A673 (cell line): ENCODE measurements at regions of chr1 and their contacts with region 1.

Region 1: DNA sequence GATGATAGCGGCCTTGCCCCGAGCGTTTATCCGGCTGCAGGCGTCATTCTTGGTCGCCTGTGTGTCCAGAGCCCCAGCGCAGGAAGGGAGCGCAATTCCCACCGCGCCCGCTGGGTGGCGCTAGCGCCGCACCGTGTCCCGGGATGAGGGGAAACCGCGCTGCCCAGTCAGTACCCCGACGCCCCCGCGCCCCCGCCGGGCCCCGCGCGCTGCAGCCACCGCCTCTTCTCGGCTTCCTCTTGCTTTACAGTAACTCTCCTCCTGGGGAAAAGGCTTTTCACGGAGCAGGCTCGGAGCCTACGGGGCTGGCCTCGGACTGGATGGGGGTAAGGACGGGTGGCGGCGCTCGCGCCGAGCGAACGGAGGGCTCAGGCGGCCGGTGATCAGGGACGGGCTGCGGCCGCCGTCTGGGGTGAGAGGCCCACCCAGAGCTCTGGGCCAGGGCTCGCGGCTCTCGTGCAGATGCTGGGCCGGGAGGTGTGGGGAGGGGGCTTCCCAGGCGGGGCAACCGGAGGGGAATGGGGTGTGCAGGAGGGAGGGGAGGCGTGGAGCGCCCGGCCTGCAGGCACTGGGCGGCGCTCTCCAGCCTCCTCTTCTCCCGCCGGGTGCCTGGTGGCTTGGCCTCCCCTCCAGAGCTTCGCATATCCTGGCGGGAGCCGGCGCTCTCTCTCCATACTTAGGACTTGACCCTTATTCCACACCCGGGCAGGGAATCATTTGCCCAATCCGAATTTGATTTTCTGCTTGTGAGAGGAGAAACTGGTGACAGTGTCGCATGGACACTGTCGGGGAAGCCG is 29.8 kb downstream of the TEX35 start:
- DNase-seq: peak; percentile 85
- H3K4me3 ChIP-seq: peak overlapping the region; percentile 92
- H3K27ac ChIP-seq: peak overlapping the region; percentile 64
- H3K4me1 ChIP-seq: no peaks in the 10 kb centered on the region
- H3K27me3 ChIP-seq: no peaks in the 10 kb centered on the region
- CTCF ChIP-seq: peak; percentile 95

Region 2: DNA sequence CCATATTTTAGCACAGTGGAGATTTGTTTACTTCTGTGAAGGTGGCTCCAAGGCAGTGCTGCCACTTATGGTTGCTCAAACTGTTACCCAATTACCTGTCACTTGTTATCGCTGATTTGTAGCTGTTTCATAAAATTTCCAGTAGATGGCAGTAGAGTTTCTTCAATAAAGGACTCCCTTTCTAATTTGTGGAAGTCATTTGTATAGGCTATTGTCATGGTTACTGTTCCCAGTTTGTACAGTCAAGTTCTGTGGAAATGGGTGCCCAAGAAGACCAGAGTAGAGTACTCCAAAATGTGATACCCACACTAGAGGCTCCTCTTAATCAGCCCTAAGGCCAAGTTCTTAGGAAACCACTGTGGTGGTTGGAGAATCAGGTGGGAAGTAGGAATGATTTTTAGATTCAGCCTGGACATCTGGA is 232.1 kb before region 1 on chr1:
- CTCF ChIA-PET with region 1: no interaction called
- POLR2A ChIA-PET with region 1: no interaction called
- intact Hi-C with region 1: loop called (anchors 5 kb)
- DNase-seq: peak; percentile 84
- H3K4me3 ChIP-seq: no peak overlapping the region
- H3K27ac ChIP-seq: no peak overlapping the region
- H3K4me1 ChIP-seq: no peaks in the 10 kb centered on the region
- H3K27me3 ChIP-seq: no peaks in the 10 kb centered on the region
- CTCF ChIP-seq: peak; percentile 74

Region 3: DNA sequence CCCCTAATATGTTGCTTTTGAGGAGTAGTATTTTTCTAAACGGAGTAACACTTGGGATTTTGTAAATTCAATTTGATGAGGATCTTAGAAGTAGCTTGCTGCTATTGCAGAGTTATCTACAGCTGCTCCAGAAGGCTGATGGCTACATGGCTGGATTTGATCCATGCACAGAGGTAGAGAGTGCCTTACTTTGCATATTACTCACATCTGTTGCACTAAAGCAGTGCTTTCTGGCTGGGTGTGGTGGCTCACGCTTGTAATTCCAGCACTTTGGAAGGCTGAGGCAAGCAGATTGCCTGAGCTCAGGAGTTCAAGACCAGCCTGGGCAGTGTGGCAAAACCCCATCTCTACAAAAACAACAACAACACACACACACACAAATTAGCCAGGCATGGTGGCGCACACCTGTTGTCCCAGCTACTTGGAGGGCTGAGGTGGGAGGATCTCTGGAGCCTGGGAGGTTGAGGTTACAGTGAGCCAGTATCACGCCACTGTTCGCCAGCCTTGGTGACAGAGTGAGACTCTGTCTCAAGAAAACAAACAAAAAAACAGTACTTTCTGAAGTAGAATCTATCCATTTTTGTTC is 206.9 kb after region 1 on chr1:
- CTCF ChIA-PET with region 1: interaction called, 4 read pairs
- POLR2A ChIA-PET with region 1: no interaction called
- intact Hi-C with region 1: loop called (anchors 1 kb)
- DNase-seq: no peak
- H3K4me3 ChIP-seq: no peak overlapping the region
- H3K27ac ChIP-seq: no peak overlapping the region
- H3K4me1 ChIP-seq: no peaks in the 10 kb centered on the region
- H3K27me3 ChIP-seq: no peaks in the 10 kb centered on the region
- CTCF ChIP-seq: no peak

Region 4: DNA sequence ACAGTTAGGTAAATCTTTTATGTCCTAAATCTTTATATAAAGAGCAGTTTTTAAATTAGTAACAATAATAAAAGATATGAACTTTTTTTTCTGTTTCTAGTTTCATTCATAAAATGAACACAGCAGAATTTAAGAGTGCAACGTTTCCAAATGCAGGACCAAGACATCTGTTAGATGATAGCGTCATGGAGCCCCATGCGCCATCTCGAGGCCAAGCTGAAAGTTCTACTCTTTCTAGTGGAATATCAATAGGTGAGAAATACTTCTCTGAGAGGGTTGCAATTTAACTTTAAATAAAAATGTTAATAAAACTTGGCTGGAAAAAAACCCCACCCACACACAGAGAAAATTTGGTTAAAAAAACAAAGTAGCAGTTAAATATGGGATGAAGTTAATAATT is 343.1 kb after region 1 on chr1:
- CTCF ChIA-PET with region 1: no interaction called
- POLR2A ChIA-PET with region 1: interaction called, 13 read pairs
- intact Hi-C with region 1: no loop called
- DNase-seq: peak; percentile 23
- H3K4me3 ChIP-seq: no peak overlapping the region
- H3K27ac ChIP-seq: no peak overlapping the region
- H3K4me1 ChIP-seq: no peaks in the 10 kb centered on the region
- H3K27me3 ChIP-seq: no peaks in the 10 kb centered on the region
- CTCF ChIP-seq: peak; percentile 56

Region 5: GRCh38 chr1:179002552-179003345 is 460.0 kb after region 1 on chr1:
- CTCF ChIA-PET with region 1: interaction called, 6 read pairs
- POLR2A ChIA-PET with region 1: no interaction called
- intact Hi-C with region 1: loop called (anchors 2 kb)
- DNase-seq: peak; percentile 69
- H3K4me3 ChIP-seq: no peak overlapping the region
- H3K27ac ChIP-seq: no peak overlapping the region
- H3K4me1 ChIP-seq: no peaks in the 10 kb centered on the region
- H3K27me3 ChIP-seq: no peaks in the 10 kb centered on the region
- CTCF ChIP-seq: peak; percentile 91

Region 6: GRCh38 chr1:179365320-179366092 is 822.7 kb after region 1 on chr1 and contains the start of gene AXDND1:
- CTCF ChIA-PET with region 1: no interaction called
- POLR2A ChIA-PET with region 1: no interaction called
- intact Hi-C with region 1: loop called (anchors 5 kb)
- DNase-seq: peak; percentile 95
- H3K4me3 ChIP-seq: peak within 1 kb of the TSS; percentile 60
- H3K27ac ChIP-seq: peak within 1 kb of the TSS; percentile 97
- H3K4me1 ChIP-seq: no peaks in the 10 kb centered on the region
- H3K27me3 ChIP-seq: no peaks in the 10 kb centered on the region
- CTCF ChIP-seq: no peak; the same call in 1 of the 2 replicates
- total RNA-seq, gene AXDND1: 0.85 TPM in 1 of 2 replicates, not detected in the other

Region 7: GRCh38 chr1:179599623-179600249 is 1057.0 kb after region 1 on chr1:
- CTCF ChIA-PET with region 1: no interaction called
- POLR2A ChIA-PET with region 1: no interaction called
- intact Hi-C with region 1: loop called (anchors 5 kb)
- DNase-seq: peak; percentile 51
- H3K4me3 ChIP-seq: no peak overlapping the region
- H3K27ac ChIP-seq: no peak overlapping the region
- H3K4me1 ChIP-seq: no peaks in the 10 kb centered on the region
- H3K27me3 ChIP-seq: peaks cover 23% of the 10 kb centered on the region
- CTCF ChIP-seq: peak; percentile 71